Right cardiac atrium (tissue), 5 donors: ENCODE measurements at regions of chr17 and their contacts with region 1.

Region 1: GRCh38 chr17:3647769-3648555 is 11.4 kb downstream of the CTNS start:
- DNase-seq: peak; percentile 45 to 82 (median 75)
- ATAC-seq: peak; percentile 64 to 67
- H3K4me3 ChIP-seq: no peak overlapping the region
- H3K27ac ChIP-seq: no peak overlapping the region
- H3K4me1 ChIP-seq: no peaks in the 10 kb centered on the region
- H3K27me3 ChIP-seq: no peaks in the 10 kb centered on the region

Region 2: GRCh38 chr17:3048767-3049471 is 599.0 kb before region 1 on chr17:
- intact Hi-C with region 1: loop called in 1 of 4 experiments (anchors 10 kb)
- DNase-seq: peak; percentile 95 to 98 (median 98)
- ATAC-seq: peak; percentile 100
- H3K4me3 ChIP-seq: peak overlapping the region; percentile 66
- H3K27ac ChIP-seq: peak overlapping the region; percentile 65
- H3K4me1 ChIP-seq: no peaks in the 10 kb centered on the region
- H3K27me3 ChIP-seq: no peaks in the 10 kb centered on the region